ENCODE measurements at regions of chr1 and their contacts with region 1.

Region 1: DNA sequence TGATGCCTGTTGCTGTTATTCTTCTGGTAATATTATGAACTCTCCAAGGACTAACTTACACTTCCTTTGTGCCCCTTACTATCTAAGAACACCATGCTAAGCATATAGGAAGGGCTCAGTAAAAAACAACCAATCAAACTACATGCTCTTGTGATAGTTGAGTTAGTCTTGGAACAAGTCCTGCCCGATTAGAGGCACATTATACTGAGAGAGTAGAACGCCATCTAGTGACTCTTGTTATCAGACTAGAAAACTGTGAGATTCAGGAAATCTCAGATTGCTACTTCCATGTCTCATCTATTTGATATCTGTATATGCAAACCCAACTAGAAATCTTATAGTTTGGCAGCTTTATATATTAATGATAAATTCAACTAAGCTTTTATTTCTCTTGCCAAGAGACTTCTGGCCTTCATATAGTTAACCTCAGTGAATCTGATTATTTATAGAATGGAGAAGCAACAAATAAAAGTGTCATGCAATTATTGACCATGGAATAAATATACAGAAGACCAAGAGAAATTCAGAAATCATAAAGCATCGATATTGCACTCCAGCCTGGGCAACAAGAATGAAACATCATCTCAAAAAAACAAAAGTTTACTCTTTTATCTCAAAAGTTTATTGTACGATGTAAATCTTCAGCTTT is 7.8 kb upstream of the SRRM1 start:
- DNase-seq: peak; percentile 35
- H3K4me3 Mint-ChIP-seq: no peak overlapping the region
- H3K27ac Mint-ChIP-seq: no peak overlapping the region
- H3K4me1 Mint-ChIP-seq: peaks cover 7% of the 10 kb centered on the region
- H3K27me3 Mint-ChIP-seq: peaks cover 17% of the 10 kb centered on the region

Region 2: GRCh38 chr1:24695202-24695974 is 60.1 kb after region 1 on chr1:
- CTCF ChIA-PET with region 1: no interaction called
- POLR2A ChIA-PET with region 1: interaction called, 11 read pairs
- DNase-seq: no peak
- H3K4me3 Mint-ChIP-seq: no peak overlapping the region
- H3K27ac Mint-ChIP-seq: peak overlapping the region; percentile 60
- H3K4me1 Mint-ChIP-seq: peaks cover 12% of the 10 kb centered on the region
- H3K27me3 Mint-ChIP-seq: peaks cover 6% of the 10 kb centered on the region

Measured in activated CD4-positive, alpha-beta T cell treated with anti-CD3 and anti-CD28 coated beads, Interleukin-2, amount 10 ng/mL, durations not matched to agents 7 days and 5 days (primary cell).